ENCODE measurements at regions of chr2 and their contacts with region 1.

Region 1: DNA sequence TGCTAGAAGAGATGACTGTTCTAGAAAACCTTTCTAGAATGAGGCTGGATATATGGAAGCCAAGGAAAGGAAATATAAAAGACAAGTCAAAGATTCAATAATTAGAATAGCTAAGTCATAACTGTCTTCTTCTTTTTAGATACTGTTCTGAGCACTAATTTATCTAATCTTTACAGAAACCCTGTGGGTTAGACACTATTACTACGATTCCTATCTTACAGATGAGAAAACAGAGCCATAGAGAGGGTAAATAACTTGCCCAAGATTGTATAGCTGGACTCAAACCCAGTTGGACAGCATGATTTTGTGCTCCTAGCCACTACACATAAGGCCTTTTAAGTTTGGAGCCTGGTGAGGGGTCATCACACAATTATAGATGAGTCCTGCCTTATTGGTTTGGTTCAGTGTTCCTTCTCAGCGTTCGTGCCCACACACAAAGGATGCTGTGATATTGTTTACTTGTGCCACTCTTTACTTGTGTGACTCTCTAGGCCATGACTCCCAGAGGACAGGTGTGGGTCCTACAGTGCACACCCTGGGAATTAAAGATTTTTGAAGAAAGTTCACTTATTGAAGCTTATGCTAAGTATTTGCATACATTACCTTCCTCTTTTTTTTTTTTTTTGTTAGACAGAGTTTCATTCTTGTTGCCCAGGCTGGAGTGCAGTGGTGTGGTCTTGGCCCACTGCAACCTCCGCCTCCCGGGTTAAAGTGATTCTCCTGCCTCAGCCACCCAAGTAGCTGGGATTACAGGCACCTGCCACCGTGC is 153.7 kb downstream of the PRKCE start:
- DNase-seq: peak; percentile 25
- ATAC-seq: peak; percentile 24
- H3K4me3 ChIP-seq: no peak overlapping the region
- H3K4me3 Mint-ChIP-seq: no peak overlapping the region
- H3K27ac ChIP-seq: no peak overlapping the region
- H3K27ac Mint-ChIP-seq: no peak overlapping the region
- H3K4me1 ChIP-seq: peaks cover 10 to 21% of the 10 kb centered on the region in 2 donors
- H3K4me1 Mint-ChIP-seq: peaks cover 62% of the 10 kb centered on the region
- H3K27me3 ChIP-seq: no peaks in the 10 kb centered on the region
- H3K27me3 Mint-ChIP-seq: no peaks in the 10 kb centered on the region
- CTCF ChIP-seq: no peak

Region 2: GRCh38 chr2:45483997-45484396 is 321.2 kb before region 1 on chr2:
- CTCF ChIA-PET with region 1: no interaction called
- POLR2A ChIA-PET with region 1: no interaction called
- intact Hi-C with region 1: no loop called
- DNase-seq: no peak
- ATAC-seq: no peak
- H3K4me3 ChIP-seq: no peak overlapping the region
- H3K4me3 Mint-ChIP-seq: no peak overlapping the region
- H3K27ac ChIP-seq: no peak overlapping the region
- H3K27ac Mint-ChIP-seq: no peak overlapping the region
- H3K4me1 ChIP-seq: no peaks in the 10 kb centered on the region
- H3K4me1 Mint-ChIP-seq: no peaks in the 10 kb centered on the region
- H3K27me3 ChIP-seq: no peaks in the 10 kb centered on the region
- H3K27me3 Mint-ChIP-seq: no peaks in the 10 kb centered on the region
- CTCF ChIP-seq: no peak

Region 3: GRCh38 chr2:45843136-45843535 is 38.0 kb after region 1 on chr2:
- CTCF ChIA-PET with region 1: no interaction called
- POLR2A ChIA-PET with region 1: no interaction called
- intact Hi-C with region 1: loop called (anchors 5 kb)
- DNase-seq: peak; percentile 67
- ATAC-seq: peak; percentile 92
- H3K4me3 ChIP-seq: peak overlapping the region in 3 of 5 experiments; percentile 2 to 8 (median 5)
- H3K4me3 Mint-ChIP-seq: peak overlapping the region; percentile 61
- H3K27ac ChIP-seq: peak overlapping the region; percentile 27 to 67
- H3K27ac Mint-ChIP-seq: peak overlapping the region; percentile 11
- H3K4me1 ChIP-seq: peaks cover 53 to 68% of the 10 kb centered on the region in 2 donors
- H3K4me1 Mint-ChIP-seq: peaks cover 68% of the 10 kb centered on the region
- H3K27me3 ChIP-seq: no peaks in the 10 kb centered on the region
- H3K27me3 Mint-ChIP-seq: no peaks in the 10 kb centered on the region
- CTCF ChIP-seq: no peak

Measured in B cell (primary cell).